ENCODE measurements at regions of chr19 and their contacts with region 1.

Region 1: DNA sequence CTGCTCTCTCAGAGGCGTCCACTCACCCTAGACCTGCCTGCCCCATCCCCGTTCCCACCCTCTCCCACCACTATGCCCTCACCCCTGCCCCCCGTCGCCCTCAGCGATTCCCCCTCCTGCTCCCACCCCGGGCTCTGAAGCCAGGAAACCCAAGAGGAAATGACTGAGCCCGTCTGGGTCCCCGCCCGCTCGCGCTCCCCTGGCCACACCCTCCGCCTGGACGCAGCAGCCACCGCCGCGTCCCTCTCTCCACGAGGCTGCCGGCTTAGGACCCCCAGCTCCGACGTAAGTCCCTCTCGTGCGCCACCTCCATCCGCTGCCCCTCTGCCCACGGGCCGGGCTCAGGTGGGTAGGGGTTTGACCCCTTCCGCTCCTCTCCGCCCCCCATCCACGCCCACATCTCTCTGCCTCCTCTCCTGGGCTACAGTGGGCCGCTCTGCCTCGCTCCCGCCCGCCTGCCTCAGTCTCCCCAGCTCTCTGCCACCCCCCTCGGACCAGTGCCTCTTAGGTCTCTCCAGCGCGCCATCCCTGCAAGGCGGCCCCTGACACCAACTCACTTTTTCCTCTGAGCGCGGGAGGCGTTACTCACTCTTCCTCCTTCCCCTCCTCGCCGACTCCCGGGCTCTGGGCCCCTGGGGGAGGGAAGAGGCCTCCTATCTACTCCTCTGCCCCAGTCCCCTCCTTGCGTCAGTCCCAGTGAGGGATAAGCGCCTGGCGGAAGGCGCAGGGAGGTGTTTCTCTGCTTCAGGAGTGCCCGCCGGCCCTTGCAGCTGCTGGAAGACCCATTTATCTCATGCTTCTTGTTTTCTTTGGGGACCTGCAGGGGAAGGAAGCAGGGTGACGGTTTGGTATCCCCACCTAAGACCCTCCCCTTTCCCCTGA is at the start of gene FXYD5:
- DNase-seq: peak; percentile 64
- ATAC-seq: peak; percentile 45
- H3K4me3 Mint-ChIP-seq: peak within 1 kb of the TSS; percentile 97
- H3K27ac Mint-ChIP-seq: peak within 1 kb of the TSS; percentile 58
- H3K4me1 Mint-ChIP-seq: peaks cover 53% of the 10 kb centered on the region
- H3K27me3 Mint-ChIP-seq: no peaks in the 10 kb centered on the region; the same call in 1 of the 2 replicates
- CTCF ChIP-seq: no peak
- total RNA-seq, gene FXYD5: 114 to 135 TPM (median 128 TPM) in 3 replicates

Region 2: GRCh38 chr19:35114353-35115176 is 40.2 kb before region 1 on chr19:
- CTCF ChIA-PET with region 1: interaction called, 13 read pairs
- POLR2A ChIA-PET with region 1: no interaction called
- DNase-seq: peak; percentile 92
- ATAC-seq: peak; percentile 82
- H3K4me3 Mint-ChIP-seq: peak overlapping the region; percentile 65
- H3K27ac Mint-ChIP-seq: no peak overlapping the region
- H3K4me1 Mint-ChIP-seq: peaks cover 46% of the 10 kb centered on the region
- H3K27me3 Mint-ChIP-seq: peaks cover 3% of the 10 kb centered on the region
- CTCF ChIP-seq: peak; percentile 99

Region 3: GRCh38 chr19:35202722-35203688 is 48.2 kb after region 1 on chr19:
- CTCF ChIA-PET with region 1: interaction called, 15 read pairs
- POLR2A ChIA-PET with region 1: interaction called, 4 read pairs
- DNase-seq: peak; percentile 54
- ATAC-seq: peak; percentile 91
- H3K4me3 Mint-ChIP-seq: peak overlapping the region; percentile 16
- H3K27ac Mint-ChIP-seq: peak overlapping the region; percentile 98
- H3K4me1 Mint-ChIP-seq: peaks cover 69% of the 10 kb centered on the region
- H3K27me3 Mint-ChIP-seq: peaks cover 10% of the 10 kb centered on the region
- CTCF ChIP-seq: no peak

Region 4: GRCh38 chr19:35224681-35225571 is 70.2 kb after region 1 on chr19:
- CTCF ChIA-PET with region 1: interaction called, 11 read pairs
- POLR2A ChIA-PET with region 1: interaction called, 4 read pairs
- DNase-seq: peak; percentile 70
- ATAC-seq: peak; percentile 84
- H3K4me3 Mint-ChIP-seq: peak overlapping the region; percentile 40
- H3K27ac Mint-ChIP-seq: no peak overlapping the region
- H3K4me1 Mint-ChIP-seq: peaks cover 21% of the 10 kb centered on the region
- H3K27me3 Mint-ChIP-seq: peaks cover 8% of the 10 kb centered on the region
- CTCF ChIP-seq: peak; percentile 23; the same call in 1 of the 2 replicates

Region 5: DNA sequence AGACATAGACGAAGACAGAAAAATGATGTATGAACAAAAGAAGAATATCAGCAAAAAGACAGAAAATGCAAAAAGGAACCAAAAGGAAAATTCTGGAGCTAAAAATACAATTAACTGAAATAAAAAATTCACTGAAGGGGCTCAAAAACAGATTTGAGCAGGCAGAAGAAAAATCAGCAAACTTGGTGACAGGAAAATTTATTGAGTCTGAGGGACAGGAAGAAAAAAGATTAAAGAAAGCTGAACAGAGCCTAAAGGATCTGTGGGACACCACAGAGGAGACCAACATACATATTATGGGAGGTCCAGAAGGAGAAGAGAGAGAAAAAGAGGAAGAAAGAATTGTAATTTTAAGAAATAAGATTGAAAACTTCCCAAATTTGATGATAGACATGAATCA is 86.7 kb after region 1 on chr19:
- CTCF ChIA-PET with region 1: no interaction called
- POLR2A ChIA-PET with region 1: no interaction called
- DNase-seq: no peak
- ATAC-seq: no peak
- H3K4me3 Mint-ChIP-seq: no peak overlapping the region
- H3K27ac Mint-ChIP-seq: no peak overlapping the region
- H3K4me1 Mint-ChIP-seq: no peaks in the 10 kb centered on the region; the same call in 1 of the 2 replicates
- H3K27me3 Mint-ChIP-seq: peaks cover 18% of the 10 kb centered on the region
- CTCF ChIP-seq: no peak

Measured in WTC11 (cell line).